RWPE1 (cell line): ENCODE measurements at regions of chr17 and their contacts with region 1.

Region 1: GRCh38 chr17:16363749-16364536 is 10.7 kb upstream of the CENPV start:
- DNase-seq: peak; percentile 64
- H3K27ac ChIP-seq: no peak overlapping the region
- CTCF ChIP-seq: peak; percentile 95

Region 2: DNA sequence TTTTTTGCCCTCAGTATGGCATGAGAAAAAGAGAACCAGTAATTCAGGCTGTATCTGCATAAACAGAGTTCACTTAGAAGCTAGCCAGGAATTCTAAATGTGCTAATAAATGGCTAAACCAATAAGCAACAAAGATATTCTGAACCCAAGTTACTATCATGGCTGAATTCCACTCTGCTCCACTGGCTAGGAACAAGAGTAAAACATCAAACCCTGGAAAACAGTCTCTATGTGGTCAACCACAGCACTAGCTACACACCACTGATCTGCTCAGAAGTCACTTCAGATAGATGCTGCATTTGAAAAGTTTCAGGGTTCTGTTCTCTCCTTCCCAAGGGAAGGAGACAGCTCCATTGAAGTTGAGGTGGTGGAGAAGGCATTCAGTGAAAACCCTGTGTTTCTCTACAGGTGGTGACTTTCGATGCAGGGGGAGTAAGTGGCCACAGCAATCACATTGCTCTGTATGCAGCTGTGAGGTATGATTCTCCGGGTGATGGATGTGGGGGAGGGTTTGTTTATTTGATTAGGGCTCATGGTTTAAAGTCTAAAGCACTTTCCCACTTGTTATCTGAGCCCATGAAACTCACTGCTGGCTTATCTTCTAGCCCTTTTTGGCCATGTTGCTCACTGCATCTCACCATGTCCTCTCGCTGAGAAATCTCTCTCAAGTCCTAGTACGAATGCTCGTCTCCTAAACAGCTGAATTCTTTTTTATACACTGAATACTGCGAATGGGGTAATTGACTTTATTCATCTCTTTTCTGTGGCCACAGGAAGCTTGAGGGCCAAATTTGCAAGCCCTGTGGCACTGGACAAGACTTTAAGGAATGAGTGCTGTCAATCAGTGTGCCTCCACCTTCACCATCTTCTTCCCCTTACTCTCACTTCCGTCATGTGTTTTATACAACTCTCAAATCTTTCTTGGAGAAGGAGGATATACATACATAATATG is 50.5 kb before region 1 on chr17:
- CTCF ChIA-PET with region 1: no interaction called
- POLR2A ChIA-PET with region 1: no interaction called
- DNase-seq: no peak
- H3K27ac ChIP-seq: no peak overlapping the region
- CTCF ChIP-seq: no peak

Region 3: GRCh38 chr17:16491703-16492612 is 128.0 kb after region 1 on chr17 and contains the start of gene LRRC75A:
- CTCF ChIA-PET with region 1: no interaction called
- POLR2A ChIA-PET with region 1: no interaction called
- DNase-seq: peak; percentile 59
- H3K27ac ChIP-seq: no peak within 1 kb of the TSS
- CTCF ChIP-seq: no peak

Region 4: GRCh38 chr17:16521070-16521727 is 157.3 kb after region 1 on chr17:
- CTCF ChIA-PET with region 1: interaction called, 12 read pairs
- POLR2A ChIA-PET with region 1: no interaction called
- DNase-seq: peak; percentile 88
- H3K27ac ChIP-seq: no peak overlapping the region
- CTCF ChIP-seq: peak; percentile 88